WTC11 (cell line): ENCODE measurements at regions of chr1 and their contacts with region 1.

Region 1: DNA sequence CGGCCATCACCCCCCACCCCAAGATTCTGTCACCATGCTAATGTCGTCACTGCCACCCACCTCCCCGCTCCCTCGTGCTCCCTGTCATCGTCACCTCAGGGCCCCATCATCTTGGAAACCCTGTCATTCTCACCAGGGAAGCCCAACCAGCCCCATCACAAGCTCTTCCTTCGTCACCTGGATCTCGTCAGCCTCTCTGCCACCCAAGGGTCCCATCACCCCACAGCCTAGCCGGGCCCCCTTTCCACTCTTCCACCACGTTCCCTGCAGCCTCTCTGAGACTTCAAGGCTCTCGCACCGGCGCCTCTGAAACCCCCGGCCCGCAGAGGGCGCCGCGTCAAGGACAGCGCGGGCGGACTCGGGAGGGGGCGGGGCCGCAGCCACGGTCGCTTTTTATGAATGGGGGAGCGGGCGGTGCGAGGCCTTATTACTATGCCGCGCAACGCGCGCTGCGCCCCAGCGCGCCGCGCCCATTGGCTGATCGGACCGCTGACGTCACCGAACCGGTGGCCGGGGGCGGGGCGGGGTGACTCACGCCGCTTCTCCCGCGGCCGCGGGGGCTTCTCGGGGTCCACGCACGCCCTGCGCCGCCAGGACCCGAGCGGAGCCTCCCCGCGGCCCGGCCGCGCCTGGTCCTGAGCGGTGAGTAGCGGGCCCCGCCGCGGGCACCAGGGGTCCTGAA is at the start of gene GPR3:
- DNase-seq: peak; percentile 96
- ATAC-seq: peak; percentile 72
- H3K4me3 Mint-ChIP-seq: peak within 1 kb of the TSS; percentile 91
- H3K27ac Mint-ChIP-seq: peak within 1 kb of the TSS; percentile 95
- H3K4me1 Mint-ChIP-seq: peaks cover 24% of the 10 kb centered on the region
- H3K27me3 Mint-ChIP-seq: peaks cover 4% of the 10 kb centered on the region
- CTCF ChIP-seq: peak; percentile 20; the same call in 1 of the 2 replicates
- total RNA-seq, gene GPR3: 7.8 to 12.4 TPM (median 7.8 TPM) in 3 replicates

Region 2: DNA sequence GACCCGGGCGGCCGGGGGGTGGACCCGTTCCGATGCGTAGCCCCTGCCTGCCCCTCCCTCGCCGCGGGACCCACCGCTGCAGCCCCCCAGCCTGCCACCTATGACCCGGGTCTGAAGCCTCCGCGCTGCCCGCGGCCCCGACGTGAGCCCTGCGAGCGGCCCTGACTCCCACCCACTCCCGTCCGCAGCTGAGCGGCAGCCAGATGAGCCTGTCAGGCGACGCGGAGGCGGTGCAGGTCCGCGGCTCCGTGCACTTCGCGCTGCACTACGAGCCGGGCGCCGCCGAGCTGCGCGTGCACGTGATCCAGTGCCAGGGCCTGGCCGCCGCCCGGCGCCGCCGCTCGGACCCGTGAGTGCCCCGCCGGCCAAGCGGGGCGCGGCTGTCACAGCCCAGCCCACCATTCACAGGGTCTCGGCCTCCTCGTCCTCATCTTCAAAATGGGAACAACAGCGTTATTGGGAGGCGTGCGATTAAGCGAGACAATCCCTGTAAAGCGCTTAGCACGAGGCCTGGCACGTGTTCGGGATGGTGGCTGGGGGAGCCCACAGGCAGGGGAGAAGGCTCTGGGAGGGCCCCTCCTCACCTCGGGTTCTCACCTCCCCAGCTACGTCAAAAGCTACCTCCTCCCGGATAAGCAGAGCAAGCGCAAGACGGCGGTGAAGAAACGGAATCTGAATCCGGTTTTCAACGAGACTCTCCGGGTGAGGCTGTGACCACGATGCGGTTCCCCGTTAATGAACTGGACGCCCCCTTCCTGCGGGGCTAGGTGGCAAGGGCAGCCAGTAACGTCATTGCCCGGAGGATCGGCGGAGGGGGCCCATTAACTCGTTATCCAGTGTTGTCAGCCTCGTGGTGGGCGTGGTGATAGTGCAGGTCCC is 42.2 kb before region 1 on chr1:
- CTCF ChIA-PET with region 1: interaction called, 10 read pairs
- POLR2A ChIA-PET with region 1: interaction called, 3 read pairs
- DNase-seq: peak; percentile 80
- ATAC-seq: peak; percentile 41
- H3K4me3 Mint-ChIP-seq: peak overlapping the region; percentile 75
- H3K27ac Mint-ChIP-seq: no peak overlapping the region
- H3K4me1 Mint-ChIP-seq: peaks cover 18% of the 10 kb centered on the region
- H3K27me3 Mint-ChIP-seq: peaks cover 12% of the 10 kb centered on the region
- CTCF ChIP-seq: no peak

Region 3: DNA sequence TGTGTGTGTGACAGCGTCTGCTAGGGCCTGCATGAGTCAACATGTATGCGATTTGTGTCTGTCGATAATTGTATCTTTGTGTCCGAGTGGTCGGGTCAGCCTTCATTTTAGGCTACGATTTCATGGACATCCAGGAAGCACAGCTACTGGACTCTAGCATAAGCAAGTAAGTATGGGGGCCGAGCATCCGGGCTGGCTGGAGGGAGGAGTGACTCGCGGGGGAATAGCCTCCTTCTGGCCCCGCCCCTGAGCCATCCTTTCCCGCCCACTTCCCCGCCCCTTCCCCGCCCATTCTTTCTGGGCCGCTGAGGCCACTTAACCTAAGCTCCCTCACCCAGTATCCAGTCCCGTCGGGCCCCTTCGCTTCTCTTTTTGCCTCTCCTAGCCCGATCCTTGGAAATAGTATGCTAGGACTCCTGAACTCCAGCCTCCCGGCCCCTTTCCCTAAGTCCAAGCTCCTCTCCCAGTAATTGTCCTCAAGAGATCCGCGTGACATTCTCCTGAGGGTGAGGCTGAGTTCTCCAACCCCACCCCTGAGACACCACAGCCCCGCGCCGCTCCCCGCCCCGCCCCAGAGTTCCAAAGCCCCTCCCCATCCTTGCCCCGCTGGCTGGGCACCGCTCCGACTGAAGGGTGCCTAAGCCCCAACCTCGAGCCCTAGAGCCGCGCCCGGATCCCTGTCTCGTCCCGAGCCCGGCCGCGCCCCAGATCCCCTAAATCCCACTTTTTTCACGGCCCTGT is 26.7 kb before region 1 on chr1:
- CTCF ChIA-PET with region 1: interaction called, 44 read pairs
- POLR2A ChIA-PET with region 1: interaction called, 7 read pairs
- DNase-seq: peak; percentile 86
- ATAC-seq: peak; percentile 53
- H3K4me3 Mint-ChIP-seq: peak overlapping the region; percentile 84
- H3K27ac Mint-ChIP-seq: peak overlapping the region; percentile 97
- H3K4me1 Mint-ChIP-seq: peaks cover 25% of the 10 kb centered on the region
- H3K27me3 Mint-ChIP-seq: peaks cover 33% of the 10 kb centered on the region
- CTCF ChIP-seq: no peak

Region 4: GRCh38 chr1:27402349-27402754 is 10.1 kb after region 1 on chr1:
- CTCF ChIA-PET with region 1: interaction called, 49 read pairs
- POLR2A ChIA-PET with region 1: no interaction called
- DNase-seq: peak; percentile 69
- ATAC-seq: peak; percentile 18
- H3K4me3 Mint-ChIP-seq: no peak overlapping the region
- H3K27ac Mint-ChIP-seq: peak overlapping the region; percentile 91
- H3K4me1 Mint-ChIP-seq: peaks cover 78% of the 10 kb centered on the region
- H3K27me3 Mint-ChIP-seq: no peaks in the 10 kb centered on the region
- CTCF ChIP-seq: no peak

Region 5: DNA sequence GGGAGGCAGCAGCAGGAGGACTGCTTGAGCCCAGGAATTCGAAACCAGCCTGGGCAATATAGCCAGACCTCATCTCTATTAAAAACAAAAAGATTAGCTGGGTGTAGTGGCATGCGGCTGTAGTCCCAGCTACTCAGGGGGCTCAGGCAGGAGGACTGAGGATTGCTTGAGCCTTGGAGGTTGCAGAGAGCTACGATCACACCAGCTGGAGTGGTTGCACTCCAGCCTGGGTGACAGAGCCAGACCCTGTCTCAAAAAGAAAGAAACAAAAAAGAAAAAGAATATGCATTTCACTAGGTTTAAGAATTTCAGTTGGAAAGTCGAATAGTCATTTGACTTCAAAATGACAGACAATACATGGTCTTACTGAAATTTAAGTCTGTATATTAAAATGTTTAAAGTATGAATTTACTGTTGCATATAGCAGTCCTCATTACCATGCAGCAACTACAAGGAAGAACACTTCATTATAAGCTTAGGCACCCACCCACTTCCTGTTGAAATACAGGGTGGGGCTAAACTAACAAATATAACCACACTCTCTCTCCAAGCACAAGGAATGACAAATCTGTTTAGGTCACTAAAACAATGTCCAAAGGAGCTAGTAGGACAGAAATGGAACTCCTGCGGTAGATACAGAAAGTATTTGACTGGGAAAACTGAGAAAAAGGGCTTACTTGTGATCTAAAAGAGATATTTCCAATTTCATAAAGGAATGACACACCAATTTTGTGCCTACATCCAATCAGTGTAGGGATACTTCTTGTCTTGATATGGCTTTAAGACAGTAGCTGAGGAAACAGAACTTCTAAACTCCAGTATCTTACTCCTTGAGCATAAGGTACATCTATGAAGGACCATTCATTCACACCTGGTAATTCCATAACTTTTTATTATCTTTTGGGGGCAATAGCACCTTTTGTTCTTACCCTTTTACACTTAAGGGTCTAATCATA is 44.2 kb after region 1 on chr1:
- CTCF ChIA-PET with region 1: no interaction called
- POLR2A ChIA-PET with region 1: no interaction called
- DNase-seq: no peak
- ATAC-seq: 0 out of 2 replicates have a peak, but pooled peaks have one; percentile 28
- H3K4me3 Mint-ChIP-seq: no peak overlapping the region
- H3K27ac Mint-ChIP-seq: peak overlapping the region; percentile 89
- H3K4me1 Mint-ChIP-seq: peaks cover 67% of the 10 kb centered on the region
- H3K27me3 Mint-ChIP-seq: no peaks in the 10 kb centered on the region
- CTCF ChIP-seq: no peak

Region 6: DNA sequence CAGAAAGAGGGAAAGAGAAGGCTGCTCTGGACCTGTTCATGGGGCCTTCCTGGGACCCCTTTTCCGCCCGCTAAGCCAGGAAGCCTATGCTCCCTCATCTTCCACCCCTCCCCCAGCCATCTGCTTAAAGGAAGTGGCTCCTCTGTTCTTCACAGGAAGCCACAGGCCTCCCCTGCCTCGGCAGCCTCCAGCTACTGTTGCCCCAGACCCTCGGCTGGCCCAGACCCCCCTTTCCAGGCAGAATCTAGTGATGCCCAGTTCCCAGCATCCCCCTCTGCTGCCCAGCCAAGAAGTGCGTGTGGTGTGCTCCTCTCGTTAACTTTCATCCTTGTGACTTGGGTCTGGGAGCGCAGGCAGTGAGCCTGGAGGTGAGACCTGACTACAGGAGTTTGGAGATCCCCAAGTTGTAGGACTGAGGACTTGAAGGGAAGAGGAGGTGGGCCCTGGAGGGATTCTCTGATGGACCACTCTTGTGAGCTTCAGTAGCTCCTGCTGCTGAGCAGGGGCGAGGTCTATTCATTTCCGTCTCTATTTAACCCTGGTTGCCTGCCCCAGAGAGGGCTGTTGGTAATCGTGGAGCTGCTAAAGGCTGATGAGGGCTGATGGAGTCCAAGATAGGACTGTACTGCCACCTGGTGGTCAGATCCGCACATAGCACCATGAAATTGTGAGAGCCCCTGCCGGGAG is 270.6 kb after region 1 on chr1:
- CTCF ChIA-PET with region 1: interaction called, 14 read pairs
- POLR2A ChIA-PET with region 1: no interaction called
- DNase-seq: peak; percentile 95
- ATAC-seq: peak; percentile 81
- H3K4me3 Mint-ChIP-seq: no peak overlapping the region
- H3K27ac Mint-ChIP-seq: peak overlapping the region; percentile 75
- H3K4me1 Mint-ChIP-seq: peaks cover 29% of the 10 kb centered on the region
- H3K27me3 Mint-ChIP-seq: peaks cover 3% of the 10 kb centered on the region; the same call in 1 of the 2 replicates
- CTCF ChIP-seq: peak; percentile 91

Region 7: DNA sequence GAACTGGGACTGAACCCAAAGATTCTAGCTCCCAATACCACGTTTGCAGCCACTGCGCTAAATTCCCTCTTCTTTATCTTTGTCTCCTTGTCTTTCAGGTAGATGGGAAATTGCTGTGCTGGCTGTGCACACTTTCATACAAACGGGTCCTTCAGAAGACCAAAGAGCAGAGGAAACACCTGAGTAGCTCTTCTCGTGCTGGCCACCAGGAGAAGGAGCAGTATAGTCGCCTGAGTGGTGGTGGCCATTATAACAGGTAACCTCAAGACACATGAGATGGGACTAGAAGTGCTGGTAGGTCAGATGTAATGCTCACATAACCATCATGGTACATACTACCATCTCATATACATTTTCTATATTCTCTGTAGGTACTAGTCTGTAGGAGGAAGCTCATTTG is 352.3 kb after region 1 on chr1:
- CTCF ChIA-PET with region 1: no interaction called
- POLR2A ChIA-PET with region 1: no interaction called
- DNase-seq: no peak
- ATAC-seq: no peak
- H3K4me3 Mint-ChIP-seq: no peak overlapping the region
- H3K27ac Mint-ChIP-seq: no peak overlapping the region
- H3K4me1 Mint-ChIP-seq: no peaks in the 10 kb centered on the region
- H3K27me3 Mint-ChIP-seq: no peaks in the 10 kb centered on the region
- CTCF ChIP-seq: no peak